ENCODE measurements at regions of chr6 and their contacts with region 1.

Region 1: GRCh38 chr6:142737368-142738034 is 207.5 kb downstream of the HIVEP2 start:
- DNase-seq: no peak
- CTCF ChIP-seq: no peak

Region 2: DNA sequence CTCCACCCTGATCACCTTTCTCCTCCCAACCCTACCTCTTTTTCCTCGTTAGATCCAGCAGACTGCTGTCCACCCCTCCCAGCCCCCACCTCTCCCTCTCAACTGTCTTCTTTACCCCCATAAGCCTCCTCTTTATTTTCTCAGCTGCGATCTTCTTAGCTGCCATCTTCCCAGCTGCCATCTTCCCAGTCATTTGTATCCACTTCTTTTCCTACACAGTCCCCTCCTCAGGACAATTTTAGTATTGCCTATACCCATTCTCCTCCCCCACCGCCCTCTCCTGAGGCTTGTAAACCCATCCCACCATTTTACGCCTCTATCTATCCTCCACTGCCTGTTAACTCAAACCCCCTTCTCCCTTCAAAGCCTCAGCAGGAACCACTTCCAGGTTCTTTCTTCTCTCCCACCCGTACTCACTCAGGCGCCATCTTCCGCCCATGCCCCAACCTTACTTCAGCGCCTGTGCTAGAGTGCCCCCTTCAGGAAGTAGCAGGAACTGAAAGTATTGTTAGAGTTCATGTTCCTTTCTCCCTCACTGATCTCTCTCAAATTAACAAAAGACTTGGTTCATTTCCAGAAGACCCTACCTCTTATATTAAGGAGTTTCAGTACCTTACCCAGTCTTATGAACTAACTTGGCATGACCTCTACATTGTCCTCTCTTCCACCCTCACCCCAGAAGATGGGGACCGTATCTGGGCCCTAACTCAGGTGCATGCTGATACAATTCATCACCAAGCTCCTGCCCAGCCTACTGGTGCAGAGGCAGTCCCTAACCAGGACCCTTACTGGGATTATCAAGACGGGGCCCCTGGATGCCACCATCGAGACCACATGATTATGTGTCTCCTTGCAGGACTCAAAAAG is 199.7 kb before region 1 on chr6:
- CTCF ChIA-PET with region 1: no interaction called
- POLR2A ChIA-PET with region 1: no interaction called
- DNase-seq: no peak
- CTCF ChIP-seq: peak; percentile 30

Region 3: DNA sequence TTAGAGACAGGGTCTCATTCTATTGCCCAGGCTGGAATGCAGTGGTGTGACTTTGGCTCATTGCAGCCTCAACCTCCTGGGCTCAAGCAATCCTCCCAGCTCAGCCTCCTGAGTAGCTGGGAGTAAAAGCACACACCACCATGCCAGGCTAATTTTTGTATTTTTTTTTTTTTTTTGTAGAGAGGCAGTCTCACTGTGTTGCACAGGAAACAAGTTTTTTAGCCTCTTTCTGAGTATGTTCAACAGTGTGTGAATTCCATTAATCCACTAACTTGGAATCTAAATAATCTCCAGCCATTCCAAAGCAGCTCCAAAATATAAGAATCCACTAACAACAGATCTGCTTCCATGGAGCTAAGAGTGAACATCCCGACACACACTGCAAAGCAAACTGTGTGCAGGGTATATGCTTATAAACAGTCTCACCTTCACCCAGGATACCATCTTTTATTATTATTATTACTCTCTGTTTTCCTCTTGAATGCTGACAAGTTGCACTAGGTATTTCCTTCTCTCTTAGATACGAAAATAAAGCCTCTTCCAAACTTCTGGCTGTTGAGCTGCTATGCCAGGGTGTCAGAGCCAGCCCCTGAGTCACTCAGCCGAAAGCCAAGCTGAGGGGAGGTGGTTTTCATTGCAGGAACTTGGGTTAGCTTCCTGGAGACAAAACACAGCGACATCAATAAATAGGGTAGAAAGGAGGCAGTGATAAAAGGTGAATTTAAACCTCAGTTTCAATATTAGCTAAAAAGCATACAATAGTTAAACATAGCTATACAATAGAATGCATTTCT is 57.4 kb before region 1 on chr6:
- CTCF ChIA-PET with region 1: no interaction called
- POLR2A ChIA-PET with region 1: no interaction called
- DNase-seq: no peak
- CTCF ChIP-seq: no peak

Region 4: GRCh38 chr6:142722012-142722411 is 15.5 kb before region 1 on chr6:
- CTCF ChIA-PET with region 1: interaction called, 17 read pairs
- POLR2A ChIA-PET with region 1: no interaction called
- DNase-seq: no peak
- CTCF ChIP-seq: no peak

Region 5: GRCh38 chr6:142773859-142774648 is 36.6 kb after region 1 on chr6:
- CTCF ChIA-PET with region 1: no interaction called
- POLR2A ChIA-PET with region 1: no interaction called
- DNase-seq: no peak
- CTCF ChIP-seq: no peak

Measured in GM10248 (cell line).